ENCODE measurements at regions of chr11 and their contacts with region 1.

Region 1: GRCh38 chr11:106076919-106077608 is at the start of gene KBTBD3:
- DNase-seq: peak; percentile 91
- ATAC-seq: peak; percentile 90
- H3K4me3 Mint-ChIP-seq: peak within 1 kb of the TSS; percentile 99
- H3K27ac Mint-ChIP-seq: peak within 1 kb of the TSS; percentile 98
- H3K4me1 Mint-ChIP-seq: peaks cover 42% of the 10 kb centered on the region
- H3K27me3 Mint-ChIP-seq: no peaks in the 10 kb centered on the region
- CTCF ChIP-seq: no peak
- total RNA-seq, gene KBTBD3: 6.5 and 7.7 TPM in 2 replicates

Region 2: GRCh38 chr11:104858882-104859775 is 1217.9 kb before region 1 on chr11:
- CTCF ChIA-PET with region 1: no interaction called
- POLR2A ChIA-PET with region 1: no interaction called
- intact Hi-C with region 1: loop called (anchors 10 kb)
- DNase-seq: peak; percentile 18
- ATAC-seq: peak; percentile 92
- H3K4me3 Mint-ChIP-seq: peak overlapping the region; percentile 68
- H3K27ac Mint-ChIP-seq: peak overlapping the region; percentile 87
- H3K4me1 Mint-ChIP-seq: peaks cover 34% of the 10 kb centered on the region
- H3K27me3 Mint-ChIP-seq: no peaks in the 10 kb centered on the region
- CTCF ChIP-seq: no peak

Region 3: DNA sequence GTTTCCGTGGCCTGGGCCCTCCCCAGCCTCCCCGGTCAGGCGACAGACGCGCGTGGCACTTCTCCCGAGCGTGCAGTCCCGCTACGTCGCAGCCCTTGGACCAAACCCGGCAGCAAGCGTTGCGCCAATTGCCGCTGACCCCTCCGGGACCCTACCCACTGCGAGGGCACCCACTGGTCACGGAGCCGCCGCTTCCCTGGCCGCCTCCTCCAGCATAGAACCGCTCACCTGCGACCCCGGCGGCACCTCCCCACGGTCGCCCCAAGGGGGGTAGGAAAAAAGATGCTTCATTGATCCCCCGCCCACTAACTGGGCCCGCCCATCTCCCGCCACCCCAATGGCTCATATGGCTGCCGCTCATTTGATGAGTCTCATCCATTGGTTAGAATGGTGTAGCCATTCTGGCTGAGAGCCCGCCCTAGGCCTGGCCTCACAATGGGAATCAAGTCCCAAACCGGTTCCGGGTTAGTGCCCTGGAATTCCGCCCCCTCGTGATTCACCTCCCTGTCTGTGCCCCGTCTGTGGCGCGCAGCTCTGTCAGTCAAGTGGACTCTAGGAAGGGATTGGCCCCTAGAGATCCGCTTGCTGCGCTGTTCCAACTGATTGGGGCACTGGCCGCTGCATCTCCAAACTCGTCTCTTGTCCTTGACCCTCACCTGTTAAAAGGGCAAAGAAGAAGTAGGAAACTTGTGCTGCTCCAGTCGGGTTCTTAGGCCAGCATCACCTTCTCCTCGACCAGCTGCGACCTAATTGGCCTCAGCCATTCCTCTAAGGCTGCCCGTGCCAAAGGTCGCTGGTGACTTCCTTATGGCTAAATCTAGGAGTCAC is 54.9 kb before region 1 on chr11 and contains the start of gene MSANTD4:
- CTCF ChIA-PET with region 1: no interaction called
- POLR2A ChIA-PET with region 1: interaction called, 13 read pairs
- intact Hi-C with region 1: loop called (anchors 1 kb)
- DNase-seq: peak; percentile 90
- ATAC-seq: peak; percentile 96
- H3K4me3 Mint-ChIP-seq: peak within 1 kb of the TSS; percentile 98
- H3K27ac Mint-ChIP-seq: peak within 1 kb of the TSS; percentile 92
- H3K4me1 Mint-ChIP-seq: peaks cover 43% of the 10 kb centered on the region
- H3K27me3 Mint-ChIP-seq: peaks cover 2% of the 10 kb centered on the region
- CTCF ChIP-seq: no peak
- total RNA-seq, gene MSANTD4: 17.4 and 18.9 TPM in 2 replicates

Region 4: DNA sequence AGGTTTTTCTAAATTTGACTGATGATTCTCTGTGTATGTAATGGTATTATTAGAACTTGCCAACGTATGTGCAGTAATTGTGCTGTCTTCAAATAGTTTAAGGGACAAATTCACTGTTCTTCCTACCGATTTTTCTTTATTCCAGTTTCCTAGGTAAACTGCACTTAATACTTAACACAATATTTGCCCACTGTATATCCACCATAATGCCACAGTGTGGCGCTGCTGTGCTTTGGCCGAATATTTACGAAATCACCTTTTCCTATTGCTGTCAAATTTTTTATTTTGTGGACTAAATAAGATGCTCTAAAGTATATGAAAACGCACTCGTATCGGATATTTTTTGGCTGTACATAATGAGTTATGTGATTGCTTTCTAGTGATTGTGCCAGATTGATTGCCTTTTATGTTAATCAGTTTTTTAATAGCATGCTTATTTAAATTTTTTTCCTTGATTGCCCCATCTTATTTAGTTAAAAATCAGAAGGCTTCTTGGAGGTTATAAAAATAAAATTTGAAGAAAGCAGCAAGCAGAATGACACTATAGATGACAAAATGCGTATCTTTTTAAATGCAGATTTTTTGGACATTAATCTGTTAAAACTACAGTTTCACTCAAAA is 10.9 kb after region 1 on chr11:
- CTCF ChIA-PET with region 1: interaction called, 3 read pairs
- POLR2A ChIA-PET with region 1: interaction called, 7 read pairs
- intact Hi-C with region 1: loop called (anchors 1 kb)
- DNase-seq: no peak
- ATAC-seq: peak; percentile 57
- H3K4me3 Mint-ChIP-seq: no peak overlapping the region
- H3K27ac Mint-ChIP-seq: no peak overlapping the region
- H3K4me1 Mint-ChIP-seq: peaks cover 35% of the 10 kb centered on the region
- H3K27me3 Mint-ChIP-seq: no peaks in the 10 kb centered on the region
- CTCF ChIP-seq: no peak

Region 5: GRCh38 chr11:107928046-107928766 is 1851.1 kb after region 1 on chr11 and contains the start of gene RAB39A:
- CTCF ChIA-PET with region 1: no interaction called
- POLR2A ChIA-PET with region 1: no interaction called
- intact Hi-C with region 1: loop called (anchors 1 kb)
- DNase-seq: peak; percentile 82
- ATAC-seq: peak; percentile 87
- H3K4me3 Mint-ChIP-seq: peak within 1 kb of the TSS; percentile 91
- H3K27ac Mint-ChIP-seq: peak within 1 kb of the TSS; percentile 80
- H3K4me1 Mint-ChIP-seq: peaks cover 37% of the 10 kb centered on the region
- H3K27me3 Mint-ChIP-seq: peaks cover 4% of the 10 kb centered on the region
- CTCF ChIP-seq: no peak
- total RNA-seq, gene RAB39A: 3.6 and 4.1 TPM in 2 replicates

Measured in activated B cell treated with CpG ODN at 0.5 μM for 24 hours (primary cell).